MCF 10A (cell line): ENCODE measurements at regions of chr7 and their contacts with region 1.

Region 1: GRCh38 chr7:136009488-136010079 is 32.4 kb upstream of the MTPN start:
- DNase-seq: peak; percentile 59
- H3K4me3 Mint-ChIP-seq: no peak overlapping the region
- H3K27ac Mint-ChIP-seq: no peak overlapping the region
- H3K4me1 Mint-ChIP-seq: no peaks in the 10 kb centered on the region
- H3K27me3 Mint-ChIP-seq: peaks cover 24% of the 10 kb centered on the region
- CTCF ChIP-seq: peak; percentile 48

Region 2: DNA sequence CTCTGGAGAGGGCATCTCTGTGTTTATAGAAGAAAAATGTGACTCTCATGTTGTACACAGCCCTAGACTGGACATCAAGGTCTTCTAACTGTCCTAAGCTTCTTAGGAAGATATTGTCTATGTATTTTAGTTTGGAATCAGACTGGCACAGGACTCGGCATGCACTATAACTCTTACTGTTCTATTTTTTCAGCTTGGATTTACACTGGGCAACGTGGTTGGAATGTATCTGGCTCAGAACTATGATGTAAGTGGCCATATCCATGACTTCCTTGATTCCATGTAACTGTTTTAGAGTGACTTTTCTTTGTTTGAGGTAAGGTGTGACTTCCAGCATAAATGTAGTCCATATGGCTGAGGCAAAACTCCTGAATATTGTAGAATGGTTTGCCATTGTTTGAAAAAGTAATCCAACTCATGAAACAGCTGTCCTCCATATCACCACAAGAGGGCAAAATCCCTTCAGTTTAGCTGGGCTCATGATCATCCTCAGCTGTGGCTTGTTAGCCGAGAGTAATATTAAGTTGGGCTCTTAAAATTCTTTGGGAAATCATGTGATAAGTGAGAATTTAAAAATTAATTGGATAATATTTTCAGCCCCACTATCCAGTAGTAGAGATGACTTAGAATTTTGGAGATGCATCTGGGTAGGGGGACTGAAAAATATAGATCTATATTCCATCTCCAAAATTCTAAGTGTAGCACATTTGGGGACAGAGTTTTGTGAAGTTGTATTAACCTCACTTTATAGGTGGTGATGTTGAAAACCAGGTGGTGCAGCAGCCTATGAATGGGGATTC is 336.8 kb before region 1 on chr7:
- CTCF ChIA-PET with region 1: interaction called, 39 read pairs
- POLR2A ChIA-PET with region 1: no interaction called
- intact Hi-C with region 1: loop called (anchors 2 kb)
- DNase-seq: peak; percentile 77
- H3K4me3 Mint-ChIP-seq: no peak overlapping the region
- H3K27ac Mint-ChIP-seq: peak overlapping the region; percentile 46
- H3K4me1 Mint-ChIP-seq: peaks cover 37% of the 10 kb centered on the region
- H3K27me3 Mint-ChIP-seq: no peaks in the 10 kb centered on the region
- CTCF ChIP-seq: peak; percentile 67

Region 3: DNA sequence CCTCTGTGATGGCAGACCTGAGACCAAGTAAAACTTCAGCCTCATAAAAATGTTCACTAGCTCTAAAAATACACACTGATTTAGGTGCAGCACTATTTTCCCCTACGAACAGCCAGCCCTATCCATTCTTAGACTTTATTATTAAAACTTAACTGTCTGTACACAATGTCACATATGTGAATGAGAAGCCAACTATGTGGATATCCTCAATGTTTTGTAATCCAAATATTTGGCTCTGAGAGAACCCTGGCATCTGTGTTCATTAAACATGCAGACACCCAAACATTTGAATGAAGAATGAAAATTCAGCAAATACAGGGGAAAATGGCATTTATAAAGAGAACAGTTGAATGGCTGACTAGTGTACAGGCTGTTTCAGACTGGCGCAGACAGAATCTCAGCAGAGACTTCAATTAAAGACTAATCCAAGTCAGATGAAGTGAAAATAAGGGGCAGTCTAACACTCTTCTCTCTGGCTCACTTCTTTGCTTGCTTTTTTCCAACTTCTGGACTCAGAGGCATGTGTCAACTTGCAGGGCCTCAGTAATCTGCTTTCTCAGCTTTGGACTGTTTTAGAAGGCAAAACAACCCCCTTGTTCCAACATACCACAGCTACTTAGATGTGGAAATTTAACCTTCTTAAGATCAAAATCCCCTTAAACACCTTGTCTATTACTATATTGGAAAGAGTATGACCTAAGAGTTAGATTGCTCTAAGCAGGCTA is 213.6 kb before region 1 on chr7:
- CTCF ChIA-PET with region 1: interaction called, 183 read pairs
- POLR2A ChIA-PET with region 1: interaction called, 4 read pairs
- intact Hi-C with region 1: loop called (anchors 1 kb)
- DNase-seq: peak; percentile 6
- H3K4me3 Mint-ChIP-seq: no peak overlapping the region
- H3K27ac Mint-ChIP-seq: peak overlapping the region; percentile 31
- H3K4me1 Mint-ChIP-seq: peaks cover 14% of the 10 kb centered on the region
- H3K27me3 Mint-ChIP-seq: no peaks in the 10 kb centered on the region
- CTCF ChIP-seq: no peak

Region 4: GRCh38 chr7:135808206-135808605 is 201.4 kb before region 1 on chr7:
- CTCF ChIA-PET with region 1: interaction called, 183 read pairs
- POLR2A ChIA-PET with region 1: no interaction called
- intact Hi-C with region 1: no loop called
- DNase-seq: no peak
- H3K4me3 Mint-ChIP-seq: no peak overlapping the region
- H3K27ac Mint-ChIP-seq: no peak overlapping the region
- H3K4me1 Mint-ChIP-seq: no peaks in the 10 kb centered on the region
- H3K27me3 Mint-ChIP-seq: no peaks in the 10 kb centered on the region
- CTCF ChIP-seq: no peak

Region 5: DNA sequence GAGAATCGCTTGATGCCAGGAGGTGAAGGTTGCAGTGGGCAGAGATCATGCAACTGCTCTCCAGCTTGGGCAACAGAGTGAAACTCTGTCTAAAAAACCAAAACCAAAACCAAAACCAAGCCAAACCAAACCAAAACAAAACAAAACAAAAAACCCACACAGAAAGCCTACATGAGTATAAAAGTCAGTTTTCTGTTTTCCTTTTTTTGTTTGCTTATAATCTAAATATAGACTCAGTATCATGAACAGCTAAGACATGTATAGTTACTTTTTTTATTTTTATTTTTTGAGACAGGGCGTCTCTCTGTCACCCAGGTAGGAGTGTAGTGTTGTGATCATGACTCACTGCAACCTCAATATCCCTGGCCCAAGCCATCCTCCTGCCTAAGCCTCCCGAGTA is 15.6 kb before region 1 on chr7:
- CTCF ChIA-PET with region 1: interaction called, 32 read pairs
- POLR2A ChIA-PET with region 1: interaction called, 3 read pairs
- intact Hi-C with region 1: no loop called
- DNase-seq: no peak
- H3K4me3 Mint-ChIP-seq: no peak overlapping the region
- H3K27ac Mint-ChIP-seq: no peak overlapping the region
- H3K4me1 Mint-ChIP-seq: peaks cover 15% of the 10 kb centered on the region
- H3K27me3 Mint-ChIP-seq: no peaks in the 10 kb centered on the region
- CTCF ChIP-seq: no peak

Region 6: GRCh38 chr7:136023134-136023875 is 13.7 kb after region 1 on chr7:
- CTCF ChIA-PET with region 1: interaction called, 12 read pairs
- POLR2A ChIA-PET with region 1: no interaction called
- intact Hi-C with region 1: no loop called
- DNase-seq: no peak
- H3K4me3 Mint-ChIP-seq: no peak overlapping the region
- H3K27ac Mint-ChIP-seq: no peak overlapping the region
- H3K4me1 Mint-ChIP-seq: no peaks in the 10 kb centered on the region
- H3K27me3 Mint-ChIP-seq: peaks cover 24% of the 10 kb centered on the region
- CTCF ChIP-seq: no peak